Left lung (tissue), 14 donors: ENCODE measurements at regions of chr20 and their contacts with region 1.

Region 1: GRCh38 chr20:49982346-49983122 is at the start of gene SNAI1:
- DNase-seq: peak; percentile 70 to 90 (median 88)
- ATAC-seq: peak; percentile 94
- H3K4me3 ChIP-seq: peak within 1 kb of the TSS; percentile 49 to 50
- H3K27ac ChIP-seq: peak within 1 kb of the TSS; percentile 62 to 65
- H3K4me1 ChIP-seq: peaks cover 15 to 58% of the 10 kb centered on the region in 2 donors
- H3K27me3 ChIP-seq: peaks cover 0 to 23% of the 10 kb centered on the region in 2 donors
- CTCF ChIP-seq: peak; percentile 19 to 34
- polyA plus RNA-seq, gene SNAI1: 6.7 to 12.2 (median 9.4) TPM

Region 2: GRCh38 chr20:49833483-49833882 is 149.1 kb before region 1 on chr20:
- intact Hi-C with region 1: no loop called
- DNase-seq: no peak
- ATAC-seq: no peak
- H3K4me3 ChIP-seq: no peak overlapping the region
- H3K27ac ChIP-seq: peak overlapping the region in 1 of 2 donors; percentile 82
- H3K4me1 ChIP-seq: peaks cover 0 to 26% of the 10 kb centered on the region in 2 donors
- H3K27me3 ChIP-seq: no peaks in the 10 kb centered on the region
- CTCF ChIP-seq: no peak

Region 3: DNA sequence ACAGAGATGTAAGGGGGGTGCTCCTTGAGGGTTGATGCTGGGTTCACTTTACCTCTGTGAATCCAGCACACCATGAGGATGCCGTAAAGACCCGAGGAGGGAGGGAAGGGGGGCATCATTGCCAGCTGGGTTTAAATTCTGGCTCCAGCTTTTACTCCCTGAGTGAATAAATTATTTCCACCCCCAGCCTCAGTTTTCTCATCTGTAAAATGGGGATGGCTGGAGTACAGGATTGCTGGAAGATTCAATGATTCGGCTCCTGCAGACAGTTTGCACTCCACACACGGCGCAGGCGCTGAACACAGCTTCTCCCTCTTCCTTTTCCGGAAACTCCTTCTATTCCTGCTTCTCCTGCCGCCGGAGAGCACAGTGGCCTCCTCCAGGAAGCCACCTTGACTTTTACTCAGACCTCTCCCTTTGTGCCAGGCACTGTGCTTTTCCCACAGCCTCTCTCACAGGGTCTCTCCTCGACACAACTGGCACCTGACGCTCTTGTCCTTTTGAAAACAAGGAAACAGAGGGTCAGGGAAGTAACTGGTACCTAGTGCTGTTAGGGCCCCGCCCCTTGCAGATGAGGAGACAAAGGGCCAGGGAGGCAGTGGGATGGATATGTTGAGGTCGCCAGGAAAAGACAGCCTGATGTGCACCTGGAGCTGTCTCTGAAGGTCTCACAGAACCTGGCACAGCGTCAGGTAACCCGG is 71.1 kb after region 1 on chr20:
- intact Hi-C with region 1: no loop called
- DNase-seq: no peak
- ATAC-seq: no peak
- H3K4me3 ChIP-seq: no peak overlapping the region
- H3K27ac ChIP-seq: no peak overlapping the region
- H3K4me1 ChIP-seq: peaks cover 8 to 17% of the 10 kb centered on the region in 2 donors
- H3K27me3 ChIP-seq: peaks cover 0 to 9% of the 10 kb centered on the region in 2 donors
- CTCF ChIP-seq: no peak

Region 4: DNA sequence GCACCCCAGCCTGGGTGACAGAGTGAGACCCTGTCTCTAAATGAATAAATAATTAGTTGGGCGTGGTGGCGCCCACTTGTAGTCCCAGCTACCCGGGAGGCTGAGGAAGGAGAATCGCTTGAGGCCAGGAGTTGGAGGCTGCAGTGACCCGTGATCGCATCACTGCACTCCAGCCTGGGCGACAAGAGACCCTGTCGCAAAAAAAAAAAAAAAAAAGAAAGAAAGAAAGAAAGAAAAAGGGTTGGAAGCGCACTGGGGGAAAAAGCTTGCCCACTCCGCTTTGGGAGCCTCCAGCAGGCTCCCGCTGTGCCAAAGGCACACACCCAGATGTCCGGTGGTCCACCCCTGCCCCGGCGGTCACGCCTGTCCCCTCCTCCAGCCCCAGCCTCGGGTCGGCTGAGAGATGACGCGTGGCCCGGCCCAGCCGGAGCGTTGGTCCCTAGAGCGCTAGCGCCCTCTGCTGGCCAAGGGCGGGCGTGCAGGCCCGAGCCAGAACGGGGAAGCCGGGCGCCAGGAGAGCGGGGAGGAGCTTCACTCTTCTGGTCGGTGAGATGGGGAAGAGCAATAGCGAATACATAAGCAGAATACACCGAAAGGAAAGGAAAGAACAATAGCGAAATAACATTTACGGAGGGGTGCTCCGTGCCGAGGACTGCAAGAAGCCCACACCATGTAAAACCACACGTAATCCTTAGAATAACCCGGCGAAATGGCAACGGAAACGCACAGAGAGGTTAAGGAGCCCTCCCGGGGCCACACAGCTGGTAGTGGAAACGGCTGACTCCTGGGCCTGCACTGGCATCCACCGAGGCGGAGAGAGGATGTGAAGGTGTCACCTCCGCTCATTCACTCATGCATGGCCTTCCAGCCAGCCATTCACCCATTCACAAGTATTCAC is 88.7 kb after region 1 on chr20:
- intact Hi-C with region 1: loop called (anchors 5 to 10 kb)
- DNase-seq: peak; percentile 87 to 100 (median 92)
- ATAC-seq: peak; percentile 99
- H3K4me3 ChIP-seq: peak overlapping the region; percentile 11 to 23
- H3K27ac ChIP-seq: no peak overlapping the region
- H3K4me1 ChIP-seq: peaks cover 0 to 12% of the 10 kb centered on the region in 2 donors
- H3K27me3 ChIP-seq: no peaks in the 10 kb centered on the region
- CTCF ChIP-seq: peak; percentile 100

Region 5: GRCh38 chr20:50172347-50173013 is 189.9 kb after region 1 on chr20:
- intact Hi-C with region 1: loop called in 1 of 2 experiments (anchors 5 kb)
- DNase-seq: peak; percentile 74 to 96 (median 89)
- ATAC-seq: peak; percentile 96
- H3K4me3 ChIP-seq: peak overlapping the region; percentile 31 to 47
- H3K27ac ChIP-seq: peak overlapping the region; percentile 76 to 80
- H3K4me1 ChIP-seq: peaks cover 0 to 26% of the 10 kb centered on the region in 2 donors
- H3K27me3 ChIP-seq: no peaks in the 10 kb centered on the region
- CTCF ChIP-seq: no peak

Region 6: DNA sequence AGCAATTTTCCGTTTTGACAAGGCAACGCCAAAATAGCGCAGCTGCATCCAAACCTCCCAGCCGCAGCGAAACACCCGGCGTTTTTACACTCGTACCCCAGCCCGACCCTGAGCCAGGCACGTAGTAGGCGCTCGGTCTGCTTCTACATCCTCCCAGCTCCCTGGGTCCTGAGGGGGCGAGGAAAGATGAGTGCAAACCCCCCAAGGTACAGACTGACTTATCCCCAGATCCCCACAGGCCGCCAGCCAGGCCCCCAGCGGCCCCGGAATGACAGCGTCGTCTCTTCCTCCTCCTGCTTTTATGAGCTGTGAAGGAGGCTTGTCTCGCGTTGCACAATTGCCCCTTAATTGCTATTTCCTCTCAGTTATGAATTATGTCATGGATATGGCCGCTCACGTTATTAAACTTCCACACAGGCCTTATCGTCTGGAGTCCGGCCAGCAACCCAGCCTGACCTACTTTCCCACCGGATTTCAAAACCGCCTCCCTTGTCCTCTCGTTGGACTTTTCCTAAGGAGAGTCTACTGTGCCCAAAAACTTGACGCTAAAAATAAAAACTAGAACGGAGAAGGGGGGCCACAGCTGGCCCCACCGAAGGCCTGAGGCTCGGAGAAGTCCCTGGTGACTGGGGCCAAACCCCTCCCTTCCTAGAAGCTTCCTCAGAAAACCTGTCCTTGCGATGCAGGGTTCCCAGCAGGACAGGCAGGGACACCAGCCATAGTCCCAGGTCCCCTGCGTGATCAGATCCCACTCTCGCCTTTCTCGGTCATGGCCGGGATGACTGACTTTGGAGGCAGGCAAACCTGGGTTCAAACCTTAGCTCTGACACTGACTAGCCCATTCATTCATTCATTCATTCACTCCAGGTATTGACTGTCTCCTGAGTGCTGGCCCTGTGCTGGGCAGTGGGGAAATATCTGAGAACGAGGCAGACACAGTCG is 396.8 kb after region 1 on chr20:
- intact Hi-C with region 1: no loop called
- DNase-seq: peak; percentile 87 to 98 (median 92)
- ATAC-seq: peak; percentile 82
- H3K4me3 ChIP-seq: peak overlapping the region; percentile 4 to 9
- H3K27ac ChIP-seq: peak overlapping the region; percentile 78 to 80
- H3K4me1 ChIP-seq: peaks cover 21 to 66% of the 10 kb centered on the region in 2 donors
- H3K27me3 ChIP-seq: no peaks in the 10 kb centered on the region
- CTCF ChIP-seq: no peak